HCT116 (cell line): ENCODE measurements at regions of chr16 and their contacts with region 1.

Region 1: GRCh38 chr16:31458844-31459721 is at the start of gene ARMC5:
- DNase-seq: peak; percentile 97
- ATAC-seq: peak; percentile 84
- H3K4me3 ChIP-seq: peak within 1 kb of the TSS; percentile 70 to 90
- H3K27ac ChIP-seq: peak within 1 kb of the TSS; percentile 97
- H3K4me1 ChIP-seq: peaks cover 5 to 45% of the 10 kb centered on the region in 2 experiments; a peak in 3 of 4 replicates
- H3K27me3 ChIP-seq: no peaks in the 10 kb centered on the region
- CTCF ChIP-seq: peak; percentile 36 to 66 (median 55); a peak in 4 of 6 replicates
- POLR2A ChIP-seq: peak; percentile 29
- RAD21 ChIP-seq: peak; percentile 35; the same call in 1 of the 2 replicates
- total RNA-seq, gene ARMC5: 11.8 TPM

Region 2: DNA sequence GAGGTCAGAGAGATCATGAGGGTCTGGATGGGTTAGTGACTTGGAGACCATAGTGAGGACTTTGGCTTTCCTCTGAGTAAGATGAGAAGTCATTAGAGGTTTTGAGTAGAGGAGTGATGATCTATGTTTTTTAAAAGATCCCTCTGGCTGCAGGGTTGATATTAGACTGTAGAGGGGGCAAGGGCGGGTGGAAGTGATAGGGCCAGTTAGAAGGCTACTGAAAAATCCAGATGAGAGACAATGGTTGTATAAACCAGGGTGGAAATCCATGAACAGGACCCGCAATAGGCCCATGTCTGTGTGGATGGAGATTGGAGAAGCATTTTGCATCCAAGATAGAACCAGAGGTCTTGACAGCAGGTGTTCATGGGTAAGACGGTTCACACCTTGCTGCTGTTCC is 976.7 kb before region 1 on chr16:
- CTCF ChIA-PET with region 1: no interaction called
- POLR2A ChIA-PET with region 1: no interaction called
- RAD21 ChIA-PET with region 1: no interaction called
- intact Hi-C with region 1: no loop called
- DNase-seq: peak; percentile 15
- ATAC-seq: peak; percentile 86
- H3K4me3 ChIP-seq: no peak overlapping the region
- H3K27ac ChIP-seq: no peak overlapping the region
- H3K4me1 ChIP-seq: peaks cover 0 to 6% of the 10 kb centered on the region in 2 experiments; a peak in 2 of 4 replicates
- H3K27me3 ChIP-seq: no peaks in the 10 kb centered on the region
- CTCF ChIP-seq: peak; percentile 40 to 60 (median 56); a peak in 5 of 6 replicates
- POLR2A ChIP-seq: no peak
- RAD21 ChIP-seq: peak; percentile 37

Region 3: GRCh38 chr16:30957456-30958174 is 501.5 kb before region 1 on chr16 and contains the start of gene SETD1A:
- CTCF ChIA-PET with region 1: interaction called, 18 read pairs
- POLR2A ChIA-PET with region 1: no interaction called
- RAD21 ChIA-PET with region 1: interaction called in 1 of 2 experiments, 3 read pairs
- intact Hi-C with region 1: no loop called
- DNase-seq: peak; percentile 90
- ATAC-seq: peak; percentile 79
- H3K4me3 ChIP-seq: peak within 1 kb of the TSS; percentile 74 to 88
- H3K27ac ChIP-seq: peak within 1 kb of the TSS; percentile 100
- H3K4me1 ChIP-seq: peaks cover 22 to 32% of the 10 kb centered on the region in 2 experiments
- H3K27me3 ChIP-seq: no peaks in the 10 kb centered on the region
- CTCF ChIP-seq: no peak
- POLR2A ChIP-seq: no peak
- RAD21 ChIP-seq: no peak
- total RNA-seq, gene SETD1A: 26.9 TPM

Region 4: DNA sequence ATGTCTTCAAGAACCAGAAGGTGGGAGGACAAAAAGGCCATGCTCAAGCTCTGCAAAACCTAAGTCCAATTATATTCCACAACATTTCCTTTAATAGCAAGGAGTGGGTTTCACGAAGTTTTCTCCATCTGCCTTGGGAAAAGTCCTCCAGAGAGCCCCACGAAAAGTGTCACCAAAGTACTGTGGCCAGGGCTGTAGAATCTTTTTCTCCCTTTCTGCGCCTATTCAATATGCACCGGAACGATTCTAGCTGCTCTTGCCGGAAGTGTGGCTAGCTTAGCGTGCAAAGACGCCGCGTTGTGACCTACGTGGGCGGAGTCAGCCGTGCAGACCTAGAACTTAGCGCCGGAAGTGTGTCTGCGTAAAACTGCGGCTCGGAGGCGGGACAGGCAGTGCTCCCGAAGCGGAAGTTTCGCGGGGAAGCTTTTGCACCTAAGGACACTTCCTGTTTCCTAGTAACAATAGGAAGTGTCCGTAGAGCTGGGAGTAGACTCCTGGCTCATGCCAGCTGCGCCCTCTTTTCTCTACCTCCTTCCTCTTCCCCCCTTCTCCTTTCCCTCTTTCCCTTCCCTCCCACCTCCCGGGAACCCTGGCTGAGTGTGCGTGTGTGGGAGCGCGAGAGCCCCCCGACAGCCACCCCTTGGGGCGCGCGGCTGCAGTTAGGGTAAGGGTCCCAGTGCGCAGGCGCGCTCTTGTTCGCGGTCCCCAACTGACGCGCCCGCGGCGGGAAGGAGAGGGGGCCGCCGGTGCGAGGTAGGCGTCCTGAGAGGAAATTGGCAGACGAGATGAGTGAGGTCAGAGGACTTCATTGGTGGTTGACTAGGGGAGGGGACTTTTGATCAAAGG is 384.9 kb before region 1 on chr16 and contains the starts of genes ZNF646 and ZNF668:
- CTCF ChIA-PET with region 1: no interaction called
- POLR2A ChIA-PET with region 1: no interaction called
- RAD21 ChIA-PET with region 1: no interaction called
- intact Hi-C with region 1: loop called (anchors 10 kb)
- DNase-seq: peak; percentile 99
- ATAC-seq: peak; percentile 86
- H3K4me3 ChIP-seq: peak within 1 kb of the TSS; percentile 87 to 99
- H3K27ac ChIP-seq: peak within 1 kb of the TSS; percentile 100
- H3K4me1 ChIP-seq: peaks cover 8 to 18% of the 10 kb centered on the region in 2 experiments; a peak in 3 of 4 replicates
- H3K27me3 ChIP-seq: no peaks in the 10 kb centered on the region
- CTCF ChIP-seq: no peak
- POLR2A ChIP-seq: peak; percentile 61
- RAD21 ChIP-seq: no peak
- total RNA-seq, gene ZNF646: 17.7 TPM
- total RNA-seq, gene ZNF668: 16.8 TPM

Region 5: DNA sequence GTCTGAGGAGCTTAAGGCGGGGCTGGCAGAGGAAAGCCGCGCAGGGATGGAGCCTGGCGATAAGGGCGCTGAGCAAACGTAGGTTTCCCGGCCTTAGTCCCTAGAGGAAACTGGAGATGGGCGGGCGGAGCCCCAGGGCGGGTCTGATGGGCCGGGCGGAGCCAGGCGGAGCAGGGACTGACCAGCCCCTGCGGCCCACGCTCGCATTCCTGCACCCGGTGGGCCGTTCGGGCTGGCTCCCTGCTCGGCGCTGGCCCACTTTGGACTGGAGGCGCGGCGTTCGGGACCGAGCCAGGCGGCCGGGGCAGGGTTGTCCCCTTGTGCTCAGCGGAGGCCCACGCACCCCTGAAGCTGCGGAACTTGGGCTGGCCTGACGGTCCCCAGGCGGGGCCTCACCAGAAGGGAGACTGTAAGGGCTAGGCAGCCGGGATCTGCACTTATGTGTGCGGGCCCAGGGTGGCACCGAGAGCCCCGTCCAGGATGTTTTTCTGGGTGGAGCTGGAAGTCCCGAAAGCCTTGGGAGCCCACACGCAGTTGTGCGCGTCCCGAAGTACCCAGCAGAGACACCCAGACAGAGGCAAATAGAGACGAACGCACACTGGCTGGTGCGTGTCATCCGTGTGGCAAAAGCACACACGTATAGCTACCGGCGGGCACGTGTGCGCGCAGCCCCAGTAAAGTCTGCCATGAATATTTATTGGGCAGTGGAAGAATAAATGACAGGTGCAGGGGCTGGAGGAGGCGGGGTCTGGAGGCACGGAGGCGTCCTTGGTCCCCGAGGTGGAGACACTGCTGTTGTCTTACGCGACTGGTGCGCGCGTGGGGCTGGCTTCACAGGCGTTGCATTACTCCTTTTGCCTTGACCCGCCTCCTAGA is 243.6 kb before region 1 on chr16:
- CTCF ChIA-PET with region 1: no interaction called
- POLR2A ChIA-PET with region 1: no interaction called
- RAD21 ChIA-PET with region 1: no interaction called
- intact Hi-C with region 1: loop called (anchors 10 kb)
- DNase-seq: peak; percentile 63
- ATAC-seq: peak; percentile 90
- H3K4me3 ChIP-seq: peak overlapping the region; percentile 89 to 96
- H3K27ac ChIP-seq: peak overlapping the region; percentile 95
- H3K4me1 ChIP-seq: peaks cover 9 to 33% of the 10 kb centered on the region in 2 experiments
- H3K27me3 ChIP-seq: no peaks in the 10 kb centered on the region
- CTCF ChIP-seq: no peak
- POLR2A ChIP-seq: peak; percentile 63
- RAD21 ChIP-seq: no peak

Region 6: GRCh38 chr16:31243734-31244670 is 215.1 kb before region 1 on chr16:
- CTCF ChIA-PET with region 1: no interaction called
- POLR2A ChIA-PET with region 1: no interaction called
- RAD21 ChIA-PET with region 1: no interaction called
- intact Hi-C with region 1: no loop called
- DNase-seq: no peak
- ATAC-seq: no peak
- H3K4me3 ChIP-seq: no peak overlapping the region
- H3K27ac ChIP-seq: no peak overlapping the region
- H3K4me1 ChIP-seq: no peaks in the 10 kb centered on the region
- H3K27me3 ChIP-seq: no peaks in the 10 kb centered on the region
- CTCF ChIP-seq: no peak
- POLR2A ChIP-seq: no peak
- RAD21 ChIP-seq: no peak

Region 7: GRCh38 chr16:31696968-31697743 is 238.1 kb after region 1 on chr16:
- CTCF ChIA-PET with region 1: no interaction called
- POLR2A ChIA-PET with region 1: no interaction called
- RAD21 ChIA-PET with region 1: no interaction called
- intact Hi-C with region 1: loop called (anchors 2 kb)
- DNase-seq: peak; percentile 43
- ATAC-seq: peak; percentile 26; the same call in 1 of the 2 replicates
- H3K4me3 ChIP-seq: no peak overlapping the region
- H3K27ac ChIP-seq: no peak overlapping the region
- H3K4me1 ChIP-seq: peaks cover 8 to 15% of the 10 kb centered on the region in 2 experiments; a peak in 3 of 4 replicates
- H3K27me3 ChIP-seq: no peaks in the 10 kb centered on the region
- CTCF ChIP-seq: peak; percentile 65 to 78 (median 71)
- POLR2A ChIP-seq: no peak
- RAD21 ChIP-seq: peak; percentile 86

Region 8: DNA sequence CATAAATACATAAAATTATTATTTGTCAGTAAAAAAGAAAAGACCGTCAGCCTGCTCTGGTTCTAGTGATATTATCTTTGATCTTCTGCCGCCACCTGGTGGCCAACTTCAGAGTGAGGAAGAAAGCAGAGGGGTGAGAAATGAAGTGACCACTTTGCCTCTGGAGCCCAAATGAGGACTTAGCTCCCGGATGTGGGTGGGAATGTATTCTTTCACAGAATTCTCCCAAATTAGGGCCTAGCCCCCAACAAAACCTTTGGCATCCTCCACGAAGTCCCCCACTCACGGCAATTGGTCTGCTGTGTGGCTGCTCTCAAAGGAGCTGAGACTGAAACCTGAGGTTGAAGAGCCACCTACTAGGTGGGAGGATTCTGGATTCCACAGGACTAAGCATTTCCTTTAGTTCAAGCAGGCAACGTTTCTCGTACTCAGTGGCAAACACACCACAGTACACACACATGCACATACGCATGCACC is 409.6 kb after region 1 on chr16:
- CTCF ChIA-PET with region 1: interaction called, 8 read pairs
- POLR2A ChIA-PET with region 1: interaction called, 6 read pairs
- RAD21 ChIA-PET with region 1: no interaction called
- intact Hi-C with region 1: loop called (anchors 2 kb)
- DNase-seq: peak; percentile 73
- ATAC-seq: peak; percentile 84
- H3K4me3 ChIP-seq: no peak overlapping the region
- H3K27ac ChIP-seq: no peak overlapping the region
- H3K4me1 ChIP-seq: peaks cover 3 to 14% of the 10 kb centered on the region in 2 experiments; a peak in 2 of 4 replicates
- H3K27me3 ChIP-seq: no peaks in the 10 kb centered on the region
- CTCF ChIP-seq: peak; percentile 64 to 74 (median 73)
- POLR2A ChIP-seq: no peak
- RAD21 ChIP-seq: peak; percentile 83